BJ (cell line): ENCODE measurements at regions of chr16 and their contacts with region 1.

Region 1: GRCh38 chr16:24010440-24011089 is 174.8 kb downstream of the PRKCB start:
- DNase-seq: peak; percentile 4
- H3K4me3 ChIP-seq: no peak overlapping the region
- H3K27me3 ChIP-seq: no peaks in the 10 kb centered on the region
- CTCF ChIP-seq: peak; percentile 79

Region 2: GRCh38 chr16:23803591-23804123 is 206.9 kb before region 1 on chr16:
- CTCF ChIA-PET with region 1: interaction called, 81 read pairs
- POLR2A ChIA-PET with region 1: no interaction called
- DNase-seq: no peak
- H3K4me3 ChIP-seq: no peak overlapping the region
- H3K27me3 ChIP-seq: no peaks in the 10 kb centered on the region
- CTCF ChIP-seq: peak; percentile 61

Region 3: DNA sequence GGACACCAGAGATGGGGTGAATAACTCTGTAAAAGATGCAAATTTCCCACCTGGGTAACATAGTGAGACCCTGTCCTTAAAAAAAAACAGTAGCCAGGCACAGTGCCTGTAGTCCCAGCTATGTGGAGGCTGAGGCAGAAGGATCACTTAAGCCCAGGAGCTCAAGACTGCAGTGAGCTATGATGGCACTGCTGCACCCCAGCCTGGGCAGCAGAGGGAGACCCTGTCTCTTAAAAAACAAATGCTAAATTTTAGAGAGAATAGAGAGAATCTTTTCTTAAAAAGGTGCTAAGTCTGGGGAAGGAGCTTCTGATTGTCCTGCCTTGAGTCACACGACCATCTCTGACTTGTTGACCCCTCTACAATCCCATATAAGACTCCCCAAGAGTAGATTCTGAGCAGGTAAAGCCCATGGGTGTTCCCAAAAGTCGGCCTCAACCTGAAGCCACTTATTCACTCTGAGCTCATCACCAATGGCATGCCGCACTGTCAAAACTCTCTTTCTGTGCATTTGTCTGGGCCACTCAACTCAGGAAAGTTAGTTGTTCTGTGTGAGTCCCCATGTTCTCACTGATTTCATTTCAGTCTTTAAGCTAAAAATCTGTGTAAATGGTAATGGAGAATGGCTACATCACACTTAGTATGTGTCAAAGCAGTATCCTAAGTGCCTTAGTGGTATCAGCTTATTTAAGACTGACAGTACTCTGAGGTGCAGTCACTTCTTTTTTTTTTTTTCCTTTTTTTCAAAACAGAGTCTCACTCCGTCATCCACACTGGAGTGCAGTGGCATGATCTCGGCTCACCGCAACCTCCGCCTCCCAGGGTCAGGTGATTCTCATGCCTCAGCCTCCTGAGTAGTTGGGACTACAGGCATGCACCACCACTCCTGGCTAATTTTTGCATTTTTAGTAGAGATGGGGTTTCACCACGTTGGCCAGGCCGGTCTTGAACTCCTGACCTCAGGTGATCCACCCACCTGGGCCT is 133.2 kb before region 1 on chr16:
- CTCF ChIA-PET with region 1: interaction called, 34 read pairs
- POLR2A ChIA-PET with region 1: no interaction called
- DNase-seq: no peak
- H3K4me3 ChIP-seq: no peak overlapping the region
- H3K27me3 ChIP-seq: no peaks in the 10 kb centered on the region
- CTCF ChIP-seq: peak; percentile 36; the same call in 1 of the 2 replicates

Region 4: DNA sequence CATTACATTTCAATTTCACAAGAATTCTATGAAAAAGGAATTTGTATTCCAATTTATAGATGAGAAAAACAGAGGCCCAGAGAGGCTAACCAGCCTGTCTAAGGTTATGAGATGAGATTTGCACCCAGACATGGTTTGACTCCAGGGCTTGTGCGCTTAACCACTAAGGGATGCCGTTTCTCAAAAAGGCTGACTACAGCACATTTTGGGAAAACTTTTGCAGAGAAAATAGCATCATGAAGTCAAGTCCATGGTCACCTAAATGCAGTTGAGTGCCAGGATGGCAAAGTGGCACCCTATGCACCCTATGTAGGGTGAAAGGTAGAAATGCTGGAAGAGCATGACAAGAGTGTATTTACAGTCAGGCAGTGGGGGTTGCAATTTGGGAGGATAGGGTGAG is 101.3 kb after region 1 on chr16:
- CTCF ChIA-PET with region 1: no interaction called
- POLR2A ChIA-PET with region 1: no interaction called
- DNase-seq: no peak
- H3K4me3 ChIP-seq: no peak overlapping the region
- H3K27me3 ChIP-seq: no peaks in the 10 kb centered on the region
- CTCF ChIP-seq: no peak